Spleen (tissue), 13 donors: ENCODE measurements at regions of chr4 and their contacts with region 1.

Region 1: DNA sequence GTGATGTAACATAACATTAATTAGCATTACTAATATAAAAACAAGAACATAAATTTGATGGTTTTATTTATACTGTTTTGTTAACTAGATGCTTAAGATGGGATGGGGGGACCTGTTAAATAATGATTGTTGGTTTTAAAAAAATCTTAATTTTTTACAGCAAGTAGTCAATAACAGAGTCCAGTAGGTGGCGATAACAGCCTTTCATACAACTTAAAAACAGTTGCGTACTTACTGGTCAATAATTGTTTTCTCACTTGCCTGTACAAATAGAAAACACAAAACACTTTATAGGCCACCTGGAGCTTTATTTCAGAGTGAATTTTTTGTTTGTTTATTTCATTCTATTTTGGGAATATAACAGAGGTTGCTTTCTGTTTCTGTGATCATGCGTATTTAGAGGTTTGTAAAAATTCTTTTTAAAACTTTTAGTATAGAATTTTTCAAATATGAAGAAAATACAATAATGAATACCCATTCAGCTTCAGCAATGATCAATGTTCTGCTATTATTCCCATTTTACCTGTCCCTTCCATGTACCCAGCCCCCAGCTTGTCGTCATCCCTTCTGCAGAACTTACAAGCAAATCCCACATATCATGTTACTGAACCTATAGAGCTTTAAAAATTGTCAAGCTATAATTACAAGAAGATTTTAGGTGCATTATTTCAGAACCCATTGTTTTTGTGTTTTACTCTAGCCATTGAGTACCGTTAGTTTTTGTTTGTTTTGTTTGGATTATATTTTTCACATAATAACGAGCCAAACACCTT is 97.1 kb downstream of the MRPL1 start:
- DNase-seq: no peak
- H3K4me3 ChIP-seq: no peak overlapping the region
- H3K27ac ChIP-seq: no peak overlapping the region
- H3K4me1 ChIP-seq: peaks cover 0 to 4% (median 0%) of the 10 kb centered on the region in 6 donors
- H3K27me3 ChIP-seq: no peaks in the 10 kb centered on the region
- CTCF ChIP-seq: peak in 8 of 11 experiments; percentile 17 to 59 (median 46)
- POLR2A ChIP-seq: no peak

Region 2: GRCh38 chr4:78517050-78517652 is 557.4 kb after region 1 on chr4:
- intact Hi-C with region 1: loop called (anchors 10 kb)
- DNase-seq: no peak
- H3K4me3 ChIP-seq: no peak overlapping the region
- H3K27ac ChIP-seq: no peak overlapping the region
- H3K4me1 ChIP-seq: peaks cover 0 to 9% (median 4%) of the 10 kb centered on the region in 6 donors
- H3K27me3 ChIP-seq: no peaks in the 10 kb centered on the region
- CTCF ChIP-seq: peak in 7 of 11 experiments; percentile 19 to 41 (median 28)
- POLR2A ChIP-seq: no peak